Heart right ventricle (tissue), 16 donors: ENCODE measurements at regions of chr3 and their contacts with region 1.

Region 1: GRCh38 chr3:109336291-109336861 is 970 bp downstream of the DPPA4 start:
- DNase-seq: no peak
- ATAC-seq: peak in 4 of 8 donors; percentile 41 to 57 (median 45)
- H3K4me3 ChIP-seq: peak overlapping the region in 9 of 10 donors; percentile 5 to 51 (median 40)
- H3K27ac ChIP-seq: no peak overlapping the region
- H3K4me1 ChIP-seq: peaks cover 0 to 7% (median 0%) of the 10 kb centered on the region in 9 donors
- H3K27me3 ChIP-seq: peaks cover 0 to 45% (median 24%) of the 10 kb centered on the region in 7 donors
- CTCF ChIP-seq: no peak

Region 2: GRCh38 chr3:108998436-108998835 is 337.9 kb before region 1 on chr3:
- intact Hi-C with region 1: no loop called
- DNase-seq: no peak
- ATAC-seq: no peak
- H3K4me3 ChIP-seq: no peak overlapping the region
- H3K27ac ChIP-seq: no peak overlapping the region
- H3K4me1 ChIP-seq: no peaks in the 10 kb centered on the region
- H3K27me3 ChIP-seq: peaks cover 0 to 4% (median 0%) of the 10 kb centered on the region in 7 donors
- CTCF ChIP-seq: no peak

Region 3: GRCh38 chr3:109363634-109364033 is 27.3 kb after region 1 on chr3:
- intact Hi-C with region 1: loop called in 1 of 10 experiments (anchors 2 kb)
- DNase-seq: no peak
- ATAC-seq: no peak
- H3K4me3 ChIP-seq: no peak overlapping the region
- H3K27ac ChIP-seq: no peak overlapping the region
- H3K4me1 ChIP-seq: no peaks in the 10 kb centered on the region
- H3K27me3 ChIP-seq: no peaks in the 10 kb centered on the region
- CTCF ChIP-seq: no peak